ENCODE measurements at regions of chr12 and their contacts with region 1.

Region 1: GRCh38 chr12:56127888-56128669 is at the start of gene ESYT1:
- DNase-seq: peak; percentile 99
- H3K4me3 ChIP-seq: peak within 1 kb of the TSS; percentile 83 to 96 (median 94)
- H3K27ac ChIP-seq: peak within 1 kb of the TSS; percentile 86
- H3K4me1 ChIP-seq: peaks cover 21% of the 10 kb centered on the region
- H3K27me3 ChIP-seq: no peaks in the 10 kb centered on the region
- CTCF ChIP-seq: peak in 1 of 3 experiments; percentile 10
- polyA plus RNA-seq, gene ESYT1: 140 to 205 TPM (median 141 TPM) in 3 replicates

Region 2: GRCh38 chr12:56178347-56178746 is 50.3 kb after region 1 on chr12:
- dilution Hi-C with region 1: loop called (anchors 10 kb)
- DNase-seq: no peak
- H3K4me3 ChIP-seq: no peak overlapping the region
- H3K27ac ChIP-seq: no peak overlapping the region
- H3K4me1 ChIP-seq: no peaks in the 10 kb centered on the region
- H3K27me3 ChIP-seq: no peaks in the 10 kb centered on the region
- CTCF ChIP-seq: no peak

Measured in keratinocyte (primary cell).